ENCODE measurements at regions of chr3 and their contacts with region 1.

Region 1: GRCh38 chr3:49339945-49340800 is at the start of gene USP4:
- DNase-seq: peak; percentile 97
- H3K4me3 ChIP-seq: peak within 1 kb of the TSS; percentile 97
- H3K27ac ChIP-seq: peak within 1 kb of the TSS; percentile 97
- H3K4me1 ChIP-seq: peaks cover 65% of the 10 kb centered on the region
- CTCF ChIP-seq: peak; percentile 84
- total RNA-seq, gene USP4: 28.6 and 41.6 TPM in 2 replicates

Region 2: DNA sequence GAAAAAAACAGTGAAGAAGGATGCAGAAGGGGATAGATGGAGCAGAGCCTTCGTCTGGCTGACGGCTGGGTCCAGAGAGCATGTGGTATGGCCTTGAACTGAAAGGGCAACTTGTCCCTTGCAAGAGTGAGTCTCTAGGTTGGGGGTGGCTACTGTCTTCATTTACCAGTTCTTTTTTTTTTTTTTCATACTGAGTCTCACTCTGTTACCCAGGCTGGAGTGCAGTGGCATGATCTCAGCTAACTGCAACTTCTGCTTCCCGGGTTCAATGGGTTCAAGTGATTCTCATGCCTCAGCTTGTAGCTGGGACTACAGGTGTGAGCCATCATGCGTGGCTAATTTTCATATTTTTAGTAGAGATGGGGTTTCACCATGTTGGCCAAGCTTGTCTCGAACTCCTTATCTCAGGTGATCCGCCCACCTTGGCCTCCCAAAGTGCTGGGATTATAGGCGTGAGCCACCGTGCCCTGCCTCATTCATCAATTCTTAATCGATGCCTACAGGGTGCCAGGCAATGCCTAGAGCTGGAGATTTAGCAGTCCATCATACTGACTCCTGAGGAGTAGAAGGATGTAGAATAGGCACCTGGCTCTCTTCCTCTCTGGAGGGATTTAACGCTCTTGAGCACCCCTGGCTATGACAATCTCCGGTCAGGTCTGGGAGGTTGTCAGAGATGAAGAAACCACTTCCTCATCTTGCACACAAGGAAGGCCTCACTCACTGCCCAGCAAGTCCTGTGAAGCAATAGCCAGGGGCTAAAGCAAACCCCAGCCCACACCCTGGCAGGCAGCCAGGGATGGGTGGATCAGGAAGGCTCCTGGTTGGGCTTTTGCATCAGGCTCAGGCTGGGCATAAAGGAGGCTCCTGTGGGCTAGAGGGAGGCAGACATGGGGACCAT is 1117.3 kb before region 1 on chr3 and contains the start of gene CAMP:
- CTCF ChIA-PET with region 1: no interaction called
- POLR2A ChIA-PET with region 1: no interaction called
- intact Hi-C with region 1: loop called (anchors 10 kb)
- DNase-seq: peak; percentile 92
- H3K4me3 ChIP-seq: peak within 1 kb of the TSS; percentile 41
- H3K27ac ChIP-seq: peak within 1 kb of the TSS; percentile 97
- H3K4me1 ChIP-seq: peaks cover 75% of the 10 kb centered on the region
- CTCF ChIP-seq: no peak
- total RNA-seq, gene CAMP: 18.2 and 34.6 TPM in 2 replicates

Region 3: GRCh38 chr3:49266410-49267095 is 73.6 kb before region 1 on chr3:
- CTCF ChIA-PET with region 1: no interaction called
- POLR2A ChIA-PET with region 1: no interaction called
- intact Hi-C with region 1: no loop called
- DNase-seq: no peak
- H3K4me3 ChIP-seq: no peak overlapping the region
- H3K27ac ChIP-seq: no peak overlapping the region
- H3K4me1 ChIP-seq: no peaks in the 10 kb centered on the region
- CTCF ChIP-seq: no peak

Region 4: GRCh38 chr3:49295489-49296058 is 44.6 kb before region 1 on chr3:
- CTCF ChIA-PET with region 1: no interaction called
- POLR2A ChIA-PET with region 1: no interaction called
- intact Hi-C with region 1: no loop called
- DNase-seq: peak; percentile 41
- H3K4me3 ChIP-seq: no peak overlapping the region
- H3K27ac ChIP-seq: no peak overlapping the region
- H3K4me1 ChIP-seq: no peaks in the 10 kb centered on the region
- CTCF ChIP-seq: peak; percentile 91

Region 5: DNA sequence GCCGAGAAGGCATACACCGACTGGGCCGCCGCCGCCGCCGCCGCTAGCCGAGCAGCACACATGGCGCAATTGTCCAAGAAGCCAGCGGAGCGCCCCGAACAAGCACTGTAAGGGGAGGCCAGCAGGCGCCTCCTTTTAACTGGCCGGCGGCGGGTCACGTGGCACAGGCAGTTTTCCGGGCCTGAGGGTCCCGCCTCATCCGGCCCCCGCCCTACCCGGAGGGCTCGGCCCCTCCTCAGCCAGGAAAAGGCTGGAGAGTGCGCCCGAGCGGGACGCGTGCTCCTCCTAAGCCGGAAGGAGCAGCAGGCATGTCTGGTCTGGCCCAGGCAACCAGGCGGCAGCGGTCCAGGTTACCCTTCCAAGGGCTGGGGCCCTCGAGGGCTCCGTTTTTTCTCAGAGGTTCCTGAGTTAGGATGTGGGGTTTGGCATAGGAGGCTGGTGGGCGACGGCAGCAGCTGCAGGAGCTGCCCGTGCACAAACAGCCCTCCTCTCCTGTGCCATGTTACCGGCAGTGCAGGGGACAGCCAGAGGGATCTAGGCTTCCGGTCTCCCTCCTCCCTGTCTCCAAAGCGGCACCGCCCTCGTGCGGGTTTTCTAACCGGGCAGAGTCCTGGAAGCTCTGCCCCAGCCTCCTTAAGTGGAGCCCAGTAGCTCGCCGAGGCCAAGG is 18.2 kb after region 1 on chr3 and contains the start of gene GPX1:
- CTCF ChIA-PET with region 1: interaction called, 5 read pairs
- POLR2A ChIA-PET with region 1: interaction called, 17 read pairs
- intact Hi-C with region 1: loop called (anchors 1 kb)
- DNase-seq: peak; percentile 90
- H3K4me3 ChIP-seq: peak within 1 kb of the TSS; percentile 68
- H3K27ac ChIP-seq: peak within 1 kb of the TSS; percentile 76
- H3K4me1 ChIP-seq: peaks cover 31% of the 10 kb centered on the region
- CTCF ChIP-seq: no peak
- total RNA-seq, gene GPX1: 77.6 and 82.3 TPM in 2 replicates

Region 6: GRCh38 chr3:49428697-49429100 is 88.5 kb after region 1 on chr3:
- CTCF ChIA-PET with region 1: no interaction called
- POLR2A ChIA-PET with region 1: interaction called, 10 read pairs
- intact Hi-C with region 1: loop called (anchors 1 kb)
- DNase-seq: peak; percentile 31
- H3K4me3 ChIP-seq: peak overlapping the region; percentile 71
- H3K27ac ChIP-seq: peak overlapping the region; percentile 82
- H3K4me1 ChIP-seq: peaks cover 14% of the 10 kb centered on the region
- CTCF ChIP-seq: no peak

Region 7: DNA sequence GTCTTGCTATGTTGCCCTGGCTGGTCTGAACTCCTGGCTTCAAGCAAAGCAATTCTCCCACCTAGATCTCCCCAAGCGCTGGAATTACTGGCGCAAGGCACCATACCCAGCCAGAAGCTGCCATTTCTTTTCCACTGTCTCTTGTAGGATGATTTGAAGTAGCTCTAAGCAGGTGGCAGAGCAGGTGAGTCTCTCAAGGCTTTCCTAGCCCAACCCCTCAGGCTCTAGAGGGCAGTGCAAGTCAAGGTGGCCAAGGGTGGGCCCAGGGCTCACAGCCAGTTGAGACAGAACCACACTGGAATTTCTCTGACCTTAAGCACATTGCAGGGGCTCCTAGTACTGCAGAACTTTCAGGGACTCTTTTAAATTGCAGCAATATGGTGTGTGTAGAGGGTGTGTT is 114.3 kb after region 1 on chr3:
- CTCF ChIA-PET with region 1: interaction called, 3 read pairs
- POLR2A ChIA-PET with region 1: interaction called, 6 read pairs
- intact Hi-C with region 1: loop called (anchors 1 kb)
- DNase-seq: peak; percentile 53
- H3K4me3 ChIP-seq: no peak overlapping the region
- H3K27ac ChIP-seq: no peak overlapping the region
- H3K4me1 ChIP-seq: no peaks in the 10 kb centered on the region
- CTCF ChIP-seq: peak; percentile 68

Region 8: DNA sequence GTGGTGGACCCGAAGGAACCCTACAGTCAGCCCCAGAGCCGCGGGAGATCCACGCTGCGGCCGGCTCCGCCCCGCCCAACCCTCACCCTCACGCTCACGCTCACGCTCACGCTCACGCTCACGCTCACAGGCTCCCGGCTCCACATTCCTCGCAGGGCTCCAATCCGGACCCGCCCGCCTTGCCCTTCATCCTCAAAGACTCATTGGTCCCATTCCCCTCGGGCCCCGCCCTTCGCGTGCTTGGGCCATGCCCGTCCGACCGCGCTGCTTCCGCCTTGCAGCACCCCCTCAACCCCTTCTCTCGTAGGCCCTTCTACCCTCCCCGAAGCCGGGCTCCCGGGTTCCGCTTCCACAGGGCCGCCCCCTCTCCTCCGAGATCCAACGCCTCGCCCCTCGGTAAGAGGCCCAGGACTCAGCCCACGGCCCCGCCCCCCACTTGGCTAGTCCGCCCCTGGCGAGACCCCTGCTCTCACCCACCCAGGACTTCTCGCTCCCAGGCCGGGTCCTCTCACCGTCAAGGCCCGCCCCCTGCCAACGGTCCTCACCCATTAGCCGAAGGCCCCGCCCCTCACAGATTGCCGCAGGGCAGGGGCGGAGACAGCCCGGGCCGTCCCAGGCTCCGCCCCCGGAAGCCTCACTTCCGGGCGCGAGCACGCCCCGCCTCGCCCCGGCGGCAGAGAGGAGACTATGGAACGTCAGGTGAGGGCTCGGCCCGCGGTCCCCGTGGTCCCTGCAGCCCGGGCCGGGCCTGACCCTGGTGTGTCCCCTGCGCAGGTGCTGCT is 333.7 kb after region 1 on chr3 and contains the start of gene APEH:
- CTCF ChIA-PET with region 1: no interaction called
- POLR2A ChIA-PET with region 1: interaction called, 6 read pairs
- intact Hi-C with region 1: loop called (anchors 5 kb)
- DNase-seq: peak; percentile 98
- H3K4me3 ChIP-seq: peak within 1 kb of the TSS; percentile 89
- H3K27ac ChIP-seq: peak within 1 kb of the TSS; percentile 84
- H3K4me1 ChIP-seq: peaks cover 17% of the 10 kb centered on the region
- CTCF ChIP-seq: no peak
- total RNA-seq, gene APEH: 94.8 and 112 TPM in 2 replicates

Measured in OCI-LY7 (cell line).